ENCODE measurements at regions of chr6 and their contacts with region 1.

Region 1: GRCh38 chr6:158072083-158072721 is 90.5 kb downstream of the SYNJ2 start:
- DNase-seq: peak; percentile 84 to 93
- ATAC-seq: peak; percentile 78
- H3K4me3 ChIP-seq: no peak overlapping the region
- H3K27ac ChIP-seq: no peak overlapping the region
- H3K4me1 ChIP-seq: no peaks in the 10 kb centered on the region
- H3K27me3 ChIP-seq: no peaks in the 10 kb centered on the region

Region 2: GRCh38 chr6:157937916-157938315 is 134.3 kb before region 1 on chr6:
- intact Hi-C with region 1: loop called in 1 of 2 experiments (anchors 5 kb)
- DNase-seq: no peak
- ATAC-seq: no peak
- H3K4me3 ChIP-seq: no peak overlapping the region
- H3K27ac ChIP-seq: no peak overlapping the region
- H3K4me1 ChIP-seq: no peaks in the 10 kb centered on the region
- H3K27me3 ChIP-seq: no peaks in the 10 kb centered on the region

Region 3: GRCh38 chr6:157981395-157982296 is 90.6 kb before region 1 on chr6 and contains the start of gene SYNJ2:
- intact Hi-C with region 1: loop called (anchors 2 kb)
- DNase-seq: peak; percentile 85 to 94
- ATAC-seq: peak; percentile 85
- H3K4me3 ChIP-seq: peak within 1 kb of the TSS; percentile 93 to 95
- H3K27ac ChIP-seq: peak within 1 kb of the TSS in 1 of 2 donors; percentile 52
- H3K4me1 ChIP-seq: no peaks in the 10 kb centered on the region
- H3K27me3 ChIP-seq: no peaks in the 10 kb centered on the region
- total RNA-seq, gene SYNJ2: 26.8 to 38.7 TPM

Region 4: DNA sequence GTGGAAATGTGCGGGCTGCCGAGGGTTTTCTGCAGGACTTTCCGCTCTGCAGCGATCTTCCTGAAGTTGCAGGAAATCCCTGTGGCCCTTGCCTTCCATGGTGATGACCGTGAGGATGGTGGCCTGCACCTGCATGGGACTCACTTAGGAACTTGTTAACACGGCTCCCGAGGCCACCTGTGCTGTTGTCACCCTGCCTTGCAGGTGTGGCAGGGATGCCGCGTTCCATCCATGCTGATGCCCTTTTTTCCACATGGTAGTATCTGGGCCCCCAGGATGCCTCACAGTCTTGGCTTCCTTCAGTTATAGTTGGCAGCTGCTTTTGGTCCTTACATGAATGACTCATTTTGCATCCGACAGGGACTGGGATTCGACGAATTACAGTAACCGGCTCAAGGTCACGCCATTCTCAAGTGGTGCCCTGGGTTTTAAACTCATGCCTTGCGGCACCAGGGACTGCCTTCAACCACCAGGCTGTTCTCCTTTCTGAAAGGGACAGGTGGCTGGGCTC is 53.3 kb before region 1 on chr6:
- intact Hi-C with region 1: loop called in 1 of 2 experiments (anchors 5 kb)
- DNase-seq: peak in 1 of 2 donors; percentile 73
- ATAC-seq: peak; percentile 33
- H3K4me3 ChIP-seq: no peak overlapping the region
- H3K27ac ChIP-seq: peak overlapping the region; percentile 20 to 22
- H3K4me1 ChIP-seq: no peaks in the 10 kb centered on the region
- H3K27me3 ChIP-seq: no peaks in the 10 kb centered on the region

Region 5: DNA sequence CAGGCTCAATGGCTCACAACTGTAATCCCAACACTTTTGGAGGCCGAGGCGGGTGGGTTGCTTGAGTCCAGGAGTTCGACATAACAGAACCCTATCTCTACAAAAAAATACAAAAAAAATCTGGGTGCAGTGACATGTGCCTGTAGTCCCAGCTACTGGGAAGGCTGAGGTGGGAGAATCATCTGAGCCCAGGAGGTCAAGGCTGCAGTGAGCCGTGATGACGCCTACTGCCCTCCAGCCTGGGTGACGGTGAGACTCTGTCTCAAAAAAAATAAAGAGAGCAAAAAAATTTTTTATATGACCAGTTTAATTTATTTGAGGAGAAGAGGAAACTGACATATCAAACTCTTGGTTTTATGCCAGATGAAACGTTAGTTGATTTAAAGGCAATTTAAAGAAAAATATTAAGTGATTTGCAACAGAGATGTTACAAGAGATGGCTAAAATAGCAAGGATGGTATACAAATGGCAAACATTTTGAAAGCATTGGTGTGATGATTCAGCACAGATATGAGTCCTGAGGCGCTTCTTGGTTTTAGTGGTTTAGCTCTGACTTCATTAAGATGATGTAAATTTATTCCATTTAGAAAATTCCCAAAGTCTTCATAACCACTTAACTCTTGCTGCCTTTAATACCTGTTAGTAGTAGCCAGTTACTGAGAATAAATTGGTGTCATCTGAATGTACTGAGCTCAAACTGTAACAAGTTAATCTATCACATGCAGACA is 113.7 kb after region 1 on chr6:
- intact Hi-C with region 1: no loop called
- DNase-seq: no peak
- ATAC-seq: no peak
- H3K4me3 ChIP-seq: no peak overlapping the region
- H3K27ac ChIP-seq: no peak overlapping the region
- H3K4me1 ChIP-seq: no peaks in the 10 kb centered on the region
- H3K27me3 ChIP-seq: no peaks in the 10 kb centered on the region

Measured in aorta (tissue), 5 donors.